ENCODE measurements at regions of chr10 and their contacts with region 1.

Region 1: GRCh38 chr10:46030091-46030937 is at the start of gene NCOA4:
- DNase-seq: peak; percentile 99
- H3K4me3 ChIP-seq: peak within 1 kb of the TSS; percentile 87
- H3K27ac ChIP-seq: peak within 1 kb of the TSS; percentile 44
- H3K4me1 ChIP-seq: peaks cover 18% of the 10 kb centered on the region
- CTCF ChIP-seq: peak; percentile 83
- total RNA-seq, gene NCOA4: 78.8 and 100.0 TPM in 2 replicates

Region 2: DNA sequence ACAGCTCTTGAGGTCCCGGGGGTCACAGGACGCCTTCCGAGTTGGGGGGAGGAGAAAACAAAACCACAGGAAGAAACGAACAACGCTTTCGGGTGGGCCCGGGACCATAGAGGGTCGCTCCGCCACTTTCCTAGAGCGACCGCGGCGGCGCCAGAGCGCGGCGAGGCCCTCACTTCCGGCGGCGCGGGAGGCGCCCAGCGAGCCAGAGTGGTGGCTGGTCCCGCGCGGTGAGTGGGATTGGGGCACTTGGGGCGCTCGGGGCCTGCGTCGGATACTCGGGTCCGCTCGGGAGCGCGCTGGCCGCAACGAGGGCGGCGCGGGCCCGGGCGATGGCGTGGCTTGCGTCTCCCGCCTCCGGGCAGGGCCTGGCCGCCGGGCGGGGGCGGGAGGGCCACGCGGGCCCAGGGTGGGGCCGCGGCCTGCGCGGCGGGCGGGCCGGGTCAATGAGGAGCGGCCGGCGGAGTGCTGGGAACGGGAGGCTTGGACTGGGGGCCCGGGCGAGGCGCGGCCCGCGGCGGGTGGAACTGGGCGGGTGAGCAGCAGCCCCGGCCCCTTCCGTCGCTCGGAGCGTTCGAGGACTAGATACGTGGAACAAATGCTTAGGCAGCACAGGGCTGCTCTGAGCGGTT is 1029.4 kb before region 1 on chr10 and contains the start of gene ZNF22:
- CTCF ChIA-PET with region 1: no interaction called
- POLR2A ChIA-PET with region 1: no interaction called
- intact Hi-C with region 1: loop called (anchors 5 kb)
- DNase-seq: peak; percentile 85
- H3K4me3 ChIP-seq: peak within 1 kb of the TSS; percentile 86
- H3K27ac ChIP-seq: peak within 1 kb of the TSS; percentile 52
- H3K4me1 ChIP-seq: peaks cover 33% of the 10 kb centered on the region
- CTCF ChIP-seq: no peak
- total RNA-seq, gene ZNF22: 46.6 and 50.6 TPM in 2 replicates

Region 3: GRCh38 chr10:45235798-45236231 is 794.5 kb before region 1 on chr10:
- CTCF ChIA-PET with region 1: no interaction called
- POLR2A ChIA-PET with region 1: interaction called, 3 read pairs
- intact Hi-C with region 1: loop called (anchors 5 kb)
- DNase-seq: no peak
- H3K4me3 ChIP-seq: no peak overlapping the region
- H3K27ac ChIP-seq: no peak overlapping the region
- H3K4me1 ChIP-seq: no peaks in the 10 kb centered on the region
- CTCF ChIP-seq: no peak

Region 4: GRCh38 chr10:46092524-46093081 is 62.3 kb after region 1 on chr10:
- CTCF ChIA-PET with region 1: no interaction called
- POLR2A ChIA-PET with region 1: interaction called, 5 read pairs
- intact Hi-C with region 1: loop called (anchors 5 kb)
- DNase-seq: peak; percentile 85
- H3K4me3 ChIP-seq: peak overlapping the region; percentile 31
- H3K27ac ChIP-seq: peak overlapping the region; percentile 74
- H3K4me1 ChIP-seq: peaks cover 78% of the 10 kb centered on the region
- CTCF ChIP-seq: no peak

Region 5: DNA sequence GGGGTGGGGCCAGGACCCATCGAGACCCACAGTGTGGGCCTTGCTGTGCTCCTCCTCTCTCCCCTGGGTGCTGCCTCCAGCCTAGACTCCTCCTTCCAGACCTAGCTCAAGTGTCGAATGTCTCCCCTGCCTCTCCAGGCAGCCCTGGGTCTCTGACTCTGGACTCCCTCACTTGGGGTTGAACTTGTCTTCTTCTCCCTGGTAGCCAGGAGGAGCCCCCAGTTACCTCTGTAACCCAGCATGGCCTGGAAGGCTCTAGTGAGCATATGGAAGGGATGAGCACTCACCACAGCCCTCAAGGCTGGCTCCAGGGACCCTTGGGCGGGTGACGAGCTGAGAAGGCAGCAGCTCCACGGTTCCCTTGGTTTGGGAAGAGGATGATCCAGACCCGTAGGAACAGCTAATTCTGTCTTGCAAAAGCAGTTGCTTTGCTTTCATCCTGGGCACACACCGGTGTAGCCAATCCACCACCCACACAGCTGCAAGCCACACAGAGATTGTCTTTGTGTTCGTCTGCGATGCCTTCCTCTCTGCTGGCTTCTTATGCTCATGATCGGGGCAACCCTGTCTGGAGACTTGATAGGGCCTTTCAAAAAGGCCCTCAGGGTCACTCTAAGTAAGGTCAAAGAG is 204.2 kb after region 1 on chr10:
- CTCF ChIA-PET with region 1: no interaction called
- POLR2A ChIA-PET with region 1: no interaction called
- intact Hi-C with region 1: no loop called
- DNase-seq: no peak
- H3K4me3 ChIP-seq: no peak overlapping the region
- H3K27ac ChIP-seq: no peak overlapping the region
- H3K4me1 ChIP-seq: no peaks in the 10 kb centered on the region
- CTCF ChIP-seq: no peak

Region 6: DNA sequence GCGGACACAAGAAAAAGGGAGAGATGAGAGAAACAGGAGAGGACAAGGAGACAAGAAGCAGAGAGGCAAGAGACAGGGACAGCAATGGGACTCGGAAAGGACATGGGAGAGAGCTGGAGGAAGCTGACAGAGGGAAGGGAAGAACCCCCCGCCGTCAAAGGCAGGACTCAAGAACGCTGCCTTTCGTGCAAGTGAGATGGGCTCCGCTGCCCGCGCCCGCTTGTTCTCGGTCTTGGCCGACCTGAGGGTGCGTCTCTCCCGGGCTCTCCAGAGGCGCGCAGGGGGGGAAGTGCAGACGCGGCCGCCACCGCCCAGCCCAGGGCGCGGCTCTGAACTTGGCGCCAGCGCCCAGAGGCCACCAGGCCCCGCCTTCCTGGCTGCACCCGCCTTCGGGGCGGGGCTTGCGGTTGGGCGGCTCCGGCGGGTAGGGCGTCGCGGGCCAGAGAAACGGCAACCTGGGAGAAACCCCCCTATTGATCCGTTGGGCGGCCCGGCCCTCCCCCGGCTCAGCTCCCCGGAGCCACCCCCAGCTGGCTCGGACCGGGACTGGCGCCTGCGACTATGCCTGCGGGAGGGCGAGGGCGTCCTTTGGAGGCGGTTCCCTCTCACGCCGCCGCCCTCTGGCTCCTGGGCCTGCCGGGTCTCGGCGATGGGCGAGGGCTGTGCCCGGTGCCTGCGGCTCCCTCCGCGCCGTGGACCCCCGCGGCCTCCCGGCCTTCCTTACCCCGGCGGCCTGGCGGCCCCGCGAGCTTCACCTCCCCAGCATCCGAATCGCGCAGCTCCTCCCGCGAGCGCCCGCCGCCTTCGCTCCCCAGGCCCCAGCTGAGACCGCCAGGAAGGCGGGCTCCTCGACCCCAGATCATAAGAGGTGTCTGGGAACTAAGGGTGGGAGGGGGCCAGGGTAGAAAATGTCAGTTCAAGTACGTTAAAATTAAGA is 254.2 kb after region 1 on chr10:
- CTCF ChIA-PET with region 1: no interaction called
- POLR2A ChIA-PET with region 1: no interaction called
- intact Hi-C with region 1: loop called (anchors 5 kb)
- DNase-seq: peak; percentile 89
- H3K4me3 ChIP-seq: peak overlapping the region; percentile 71
- H3K27ac ChIP-seq: peak overlapping the region; percentile 39
- H3K4me1 ChIP-seq: peaks cover 27% of the 10 kb centered on the region
- CTCF ChIP-seq: no peak